ENCODE measurements at regions of chr17 and their contacts with region 1.

Region 1: DNA sequence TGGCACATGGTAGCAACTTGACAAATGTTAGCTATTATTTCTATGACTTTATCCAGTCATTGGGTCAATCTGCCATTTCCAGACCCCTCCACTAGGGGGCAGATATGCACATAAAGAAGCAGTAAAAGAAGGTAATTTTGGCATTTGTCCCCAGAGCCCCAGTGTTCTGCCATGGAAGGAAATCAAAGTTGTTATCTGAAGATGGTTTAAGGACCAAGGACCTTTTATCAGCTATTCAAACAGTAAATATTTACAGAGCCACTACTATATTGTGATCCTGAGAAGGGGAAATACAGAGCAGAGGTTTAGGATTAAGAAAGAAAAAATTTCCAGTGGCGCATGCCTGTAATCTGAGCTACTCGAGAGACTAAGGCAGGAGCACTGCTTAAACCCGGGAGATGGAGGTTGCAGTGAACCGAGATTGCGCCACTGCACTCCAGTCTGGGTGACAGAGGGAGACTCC is 20.0 kb downstream of the TRAF4 start:
- DNase-seq: peak; percentile 63
- H3K4me3 Mint-ChIP-seq: no peak overlapping the region
- H3K27ac Mint-ChIP-seq: peak overlapping the region; percentile 53
- H3K4me1 Mint-ChIP-seq: peaks cover 26% of the 10 kb centered on the region
- H3K27me3 Mint-ChIP-seq: no peaks in the 10 kb centered on the region

Region 2: GRCh38 chr17:28818819-28819221 is 55.0 kb after region 1 on chr17:
- intact Hi-C with region 1: no loop called
- DNase-seq: no peak
- H3K4me3 Mint-ChIP-seq: no peak overlapping the region
- H3K27ac Mint-ChIP-seq: no peak overlapping the region
- H3K4me1 Mint-ChIP-seq: peaks cover 8% of the 10 kb centered on the region
- H3K27me3 Mint-ChIP-seq: no peaks in the 10 kb centered on the region

Region 3: DNA sequence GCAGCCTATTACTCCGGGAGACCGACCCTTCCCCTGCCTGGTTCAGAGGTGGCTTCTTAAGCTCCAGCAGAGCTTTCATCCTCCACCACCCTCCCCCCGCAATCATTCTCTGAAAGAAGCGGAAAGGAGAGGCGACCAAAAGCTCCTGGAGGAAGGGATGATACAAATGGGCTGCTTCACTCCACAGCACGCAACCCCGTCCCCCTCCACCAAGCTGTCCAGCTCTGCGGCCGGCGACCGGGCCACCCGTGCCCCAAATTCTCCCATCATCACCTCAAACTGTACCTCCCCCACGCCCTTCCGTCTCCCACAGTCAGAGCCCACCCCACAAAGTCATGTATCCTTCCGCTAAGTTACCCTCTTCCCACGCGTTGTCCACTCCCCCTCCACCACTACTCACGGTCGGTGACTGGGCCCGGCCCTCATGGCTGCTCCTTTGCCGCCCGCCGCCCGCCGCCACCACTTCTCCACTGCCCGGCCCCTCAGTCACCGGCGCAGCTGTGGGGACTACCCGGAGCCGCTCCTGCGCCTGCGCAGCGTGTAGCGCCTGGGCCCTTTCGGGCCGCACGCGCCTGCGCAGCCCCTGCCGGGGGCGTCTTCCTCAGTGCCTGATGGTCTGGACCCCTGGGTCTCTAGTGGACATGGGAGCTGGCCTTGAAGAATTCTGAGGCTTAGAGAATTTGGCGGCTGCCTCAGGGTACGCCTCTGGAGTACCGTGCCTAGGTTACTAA is 78.6 kb after region 1 on chr17 and contains the start of gene FAM222B:
- intact Hi-C with region 1: loop called (anchors 2 kb)
- DNase-seq: peak; percentile 85
- H3K4me3 Mint-ChIP-seq: peak within 1 kb of the TSS; percentile 97
- H3K27ac Mint-ChIP-seq: peak within 1 kb of the TSS; percentile 95
- H3K4me1 Mint-ChIP-seq: peaks cover 24% of the 10 kb centered on the region
- H3K27me3 Mint-ChIP-seq: no peaks in the 10 kb centered on the region
- total RNA-seq, gene FAM222B: 27.5 and 28.1 TPM in 2 replicates

Region 4: DNA sequence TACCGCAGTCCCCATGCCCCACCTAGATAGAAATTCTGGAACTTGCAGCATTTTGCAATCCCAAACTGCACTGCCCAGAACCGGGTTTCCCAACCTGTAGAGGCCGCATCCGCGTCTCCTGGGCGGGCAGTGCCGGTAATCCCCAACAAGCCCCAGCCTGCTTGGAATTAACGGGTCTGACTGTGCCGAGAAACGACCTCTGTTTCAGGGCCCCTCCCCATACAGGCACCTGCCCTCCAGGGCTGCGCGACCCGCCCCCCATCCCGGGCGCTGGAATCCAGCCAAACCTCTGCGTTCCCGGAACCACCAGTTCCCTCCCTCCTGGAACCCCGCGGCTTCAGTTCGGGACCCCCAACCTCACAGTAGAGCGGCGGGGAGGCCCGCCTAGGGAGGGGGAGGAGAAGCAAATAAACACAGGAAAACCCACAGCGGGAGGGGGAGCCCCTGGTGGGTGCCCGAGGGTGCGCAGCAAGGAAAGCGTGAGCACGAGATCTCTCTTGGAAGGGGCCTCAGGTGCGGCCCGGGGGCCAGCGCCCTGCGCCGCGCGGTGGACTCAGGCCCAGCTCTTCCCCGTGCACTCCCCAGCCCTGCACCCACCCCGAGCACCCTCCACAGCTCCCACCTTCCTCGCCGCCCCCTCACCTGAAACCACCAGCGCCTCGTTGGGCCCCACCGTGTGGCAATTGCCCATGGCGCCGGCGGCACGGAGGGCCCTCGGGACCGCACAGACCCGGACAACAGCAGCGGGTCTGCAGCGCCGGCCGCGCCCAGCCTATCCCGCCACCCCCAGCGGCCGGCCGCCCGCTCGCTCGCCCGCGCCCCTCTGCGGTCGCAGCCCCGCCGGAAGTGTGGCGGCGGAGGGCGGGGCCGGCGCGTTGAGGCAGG is 133.3 kb after region 1 on chr17 and contains the start of gene FLOT2:
- intact Hi-C with region 1: loop called (anchors 1 kb)
- DNase-seq: peak; percentile 50
- H3K4me3 Mint-ChIP-seq: peak within 1 kb of the TSS; percentile 95
- H3K27ac Mint-ChIP-seq: peak within 1 kb of the TSS; percentile 96
- H3K4me1 Mint-ChIP-seq: peaks cover 68% of the 10 kb centered on the region
- H3K27me3 Mint-ChIP-seq: no peaks in the 10 kb centered on the region
- total RNA-seq, gene FLOT2: 92.2 and 98.8 TPM in 2 replicates

Region 5: DNA sequence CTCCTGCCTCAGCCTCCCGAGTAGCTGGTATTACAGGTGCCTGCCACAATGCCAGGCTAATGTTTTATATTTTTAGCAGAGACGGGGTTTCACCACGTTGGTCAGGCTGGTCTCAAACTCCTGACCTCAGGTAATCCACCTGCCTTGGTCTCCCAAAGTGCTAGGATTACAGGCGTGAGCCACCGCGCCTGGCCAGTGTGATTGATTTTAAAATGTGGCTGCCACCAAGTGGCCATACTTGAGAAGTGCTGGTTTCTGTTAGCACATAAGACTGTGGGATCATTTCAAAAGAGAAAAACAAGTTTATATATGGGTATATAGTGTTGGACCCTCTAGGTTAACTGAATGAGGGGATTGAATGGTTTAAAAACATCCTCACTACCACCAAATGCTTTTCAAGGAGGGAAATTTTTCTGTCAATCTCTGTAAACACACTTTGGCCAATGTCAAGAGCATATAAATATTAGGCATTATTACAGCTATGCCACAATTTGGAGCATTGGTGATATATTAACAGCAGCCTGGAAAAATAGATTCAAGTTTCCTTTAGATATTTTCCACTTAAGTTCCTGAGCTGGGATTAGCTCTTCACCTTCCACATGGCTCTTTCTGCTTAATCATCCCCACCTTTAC is 152.6 kb after region 1 on chr17:
- intact Hi-C with region 1: loop called (anchors 1 kb)
- DNase-seq: no peak
- H3K4me3 Mint-ChIP-seq: no peak overlapping the region
- H3K27ac Mint-ChIP-seq: peak overlapping the region; percentile 47
- H3K4me1 Mint-ChIP-seq: peaks cover 18% of the 10 kb centered on the region
- H3K27me3 Mint-ChIP-seq: no peaks in the 10 kb centered on the region

Region 6: DNA sequence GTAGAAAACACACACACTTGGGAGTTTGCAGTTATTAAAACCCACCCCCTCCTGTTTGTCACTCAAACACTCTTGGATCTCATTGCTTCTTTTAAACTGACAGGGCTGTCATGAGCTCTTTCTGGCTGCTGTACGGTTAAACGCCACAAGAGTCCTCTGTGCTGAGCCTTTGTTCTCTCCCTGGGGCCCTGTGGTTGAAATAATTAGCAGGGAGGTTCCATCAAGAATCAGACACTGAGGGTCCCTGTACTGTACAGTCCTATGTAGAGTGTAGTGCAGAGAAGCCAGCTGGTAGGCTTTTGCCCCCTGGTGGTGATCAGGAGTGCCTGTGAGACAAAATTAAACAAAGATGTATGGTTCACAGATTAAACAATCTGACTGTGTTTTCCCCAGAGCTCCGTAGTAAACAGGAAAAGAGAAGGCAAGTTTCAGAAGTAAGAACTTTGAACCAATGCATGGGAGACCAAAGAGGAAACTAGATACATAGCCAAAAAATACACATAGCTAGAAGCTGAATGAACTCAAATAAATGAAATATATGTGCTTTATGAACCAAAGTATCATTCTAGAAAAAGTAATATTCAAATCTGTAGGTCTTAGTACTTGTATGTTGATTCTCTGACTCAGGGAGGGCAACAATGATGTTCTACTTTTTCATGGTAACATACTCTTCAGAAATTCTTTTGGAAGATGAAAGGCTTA is 1167.5 kb after region 1 on chr17:
- intact Hi-C with region 1: no loop called
- DNase-seq: peak; percentile 62
- H3K4me3 Mint-ChIP-seq: no peak overlapping the region
- H3K27ac Mint-ChIP-seq: no peak overlapping the region
- H3K4me1 Mint-ChIP-seq: peaks cover 28% of the 10 kb centered on the region
- H3K27me3 Mint-ChIP-seq: peaks cover 1% of the 10 kb centered on the region

Measured in activated T-helper 1 cell treated with anti-CD3 and anti-CD28 coated beads, Interleukin-12 subunit alpha, Interleukin-12 subunit beta, Interleukin-2, Interleukin-4 antibody, amounts not matched to agents 30 ng/mL and 10 ng/mL and 1 ng/mL, durations not matched to agents 14 hours and 24 hours and 36 hours (primary cell).